Common myeloid progenitor, CD34-positive (primary cell): ENCODE measurements at regions of chr4 and their contacts with region 1.

Region 1: GRCh38 chr4:73864365-73864764 is 4.8 kb upstream of the CXCL1 start:
- DNase-seq: peak in 2 of 3 donors; percentile 57 to 60
- H3K4me3 ChIP-seq: no peak overlapping the region
- H3K27ac ChIP-seq: no peak overlapping the region
- H3K4me1 ChIP-seq: peaks cover 0 to 12% (median 7%) of the 10 kb centered on the region in 4 experiments
- H3K27me3 ChIP-seq: peaks cover 0 to under 1% (median 0%) of the 10 kb centered on the region in 5 experiments

Region 2: DNA sequence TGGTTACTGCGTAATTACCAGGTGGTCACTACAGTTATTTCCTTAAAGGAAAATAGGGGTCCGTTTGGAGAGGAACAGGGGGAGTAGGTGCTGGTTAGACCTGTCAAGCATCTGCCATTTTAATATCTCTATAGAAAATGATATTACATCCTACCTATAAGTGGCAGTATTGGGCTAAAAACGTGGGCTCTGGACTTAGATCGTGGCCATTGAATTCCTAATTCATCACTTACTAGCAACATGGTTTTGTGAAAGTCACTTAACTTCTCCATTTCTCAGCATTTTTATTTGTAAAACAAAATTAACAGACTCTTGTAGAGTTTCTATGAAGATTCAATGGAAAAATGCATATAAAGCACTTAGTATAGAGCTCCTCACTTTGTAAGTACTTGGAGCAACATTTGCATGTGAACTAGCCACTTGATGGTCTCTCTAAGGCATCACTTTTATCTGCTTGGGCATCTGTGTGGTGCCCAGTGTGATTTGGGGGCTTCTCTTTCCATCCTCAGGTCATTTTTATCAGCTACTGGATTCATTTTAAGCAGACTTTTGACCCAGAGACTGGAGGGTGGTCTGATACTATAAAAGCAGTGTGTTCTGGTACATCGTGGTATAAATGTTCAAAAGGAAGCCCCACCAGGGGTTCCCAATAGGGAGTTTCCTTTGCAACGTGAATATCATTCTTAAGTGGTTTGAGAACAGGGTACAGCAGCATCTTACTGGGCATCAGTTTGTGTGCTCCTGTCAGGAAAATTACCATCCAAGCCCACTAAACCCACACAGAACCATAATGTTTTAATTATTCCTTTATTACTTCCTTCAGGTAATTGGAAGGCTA is 201.4 kb before region 1 on chr4:
- CTCF ChIA-PET with region 1: interaction called, 38 read pairs
- POLR2A ChIA-PET with region 1: interaction called, 4 read pairs
- DNase-seq: peak; percentile 61 to 81 (median 81)
- H3K4me3 ChIP-seq: no peak overlapping the region
- H3K27ac ChIP-seq: no peak overlapping the region
- H3K4me1 ChIP-seq: peaks cover 5 to 25% (median 12%) of the 10 kb centered on the region in 4 experiments
- H3K27me3 ChIP-seq: no peaks in the 10 kb centered on the region

Region 3: GRCh38 chr4:73683033-73683432 is 181.3 kb before region 1 on chr4:
- CTCF ChIA-PET with region 1: no interaction called
- POLR2A ChIA-PET with region 1: no interaction called
- DNase-seq: no peak
- H3K4me3 ChIP-seq: no peak overlapping the region
- H3K27ac ChIP-seq: no peak overlapping the region
- H3K4me1 ChIP-seq: peaks cover 0 to 4% (median 1%) of the 10 kb centered on the region in 4 experiments
- H3K27me3 ChIP-seq: no peaks in the 10 kb centered on the region

Region 4: DNA sequence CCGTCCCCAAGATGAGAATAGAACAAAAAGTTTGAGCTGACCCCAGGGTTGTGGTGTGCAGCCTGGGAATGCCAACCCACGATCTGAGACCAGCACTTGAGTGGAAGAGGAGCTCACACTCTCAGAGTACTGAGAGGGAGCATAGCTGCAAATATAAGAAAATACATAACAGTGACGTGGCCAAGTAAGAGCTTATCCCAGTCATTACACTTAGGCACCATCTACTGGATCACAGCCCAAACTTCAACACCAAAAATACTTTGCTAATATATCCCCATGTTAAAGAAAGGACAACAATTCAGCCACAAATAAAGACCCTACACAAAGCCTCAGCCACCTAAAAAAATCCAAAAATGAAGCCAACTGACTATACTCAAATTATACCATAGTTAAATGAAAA is 61.2 kb before region 1 on chr4:
- CTCF ChIA-PET with region 1: no interaction called
- POLR2A ChIA-PET with region 1: no interaction called
- DNase-seq: no peak
- H3K4me3 ChIP-seq: no peak overlapping the region
- H3K27ac ChIP-seq: no peak overlapping the region
- H3K4me1 ChIP-seq: no peaks in the 10 kb centered on the region
- H3K27me3 ChIP-seq: no peaks in the 10 kb centered on the region

Region 5: DNA sequence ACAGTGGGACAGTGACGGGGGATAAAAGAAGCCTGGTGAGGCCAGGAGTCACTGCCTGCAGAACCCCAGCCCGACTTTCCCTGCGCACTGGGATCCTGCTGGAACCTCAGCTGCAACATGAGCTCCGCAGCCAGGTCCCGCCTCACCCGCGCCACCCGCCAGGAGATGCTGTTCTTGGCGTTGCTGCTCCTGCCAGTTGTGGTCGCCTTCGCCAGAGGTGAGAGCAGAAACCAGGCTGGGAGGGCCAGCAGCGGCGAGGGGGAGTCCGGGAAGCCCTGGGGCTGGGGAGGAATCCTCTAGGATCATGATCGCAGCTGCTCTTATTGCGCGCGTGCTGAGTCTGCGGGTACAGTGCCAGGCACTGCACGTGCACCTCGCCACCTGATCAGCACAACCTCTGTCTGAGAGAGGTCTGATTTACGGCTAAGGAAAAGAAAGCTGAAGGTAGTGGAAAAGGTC is 11.1 kb before region 1 on chr4 and contains the start of gene PF4V1:
- CTCF ChIA-PET with region 1: interaction called, 10 read pairs
- POLR2A ChIA-PET with region 1: no interaction called
- DNase-seq: peak in 2 of 3 donors; percentile 20 to 52
- H3K4me3 ChIP-seq: peak within 1 kb of the TSS in 4 of 7 experiments; percentile 24 to 60 (median 48)
- H3K27ac ChIP-seq: no peak within 1 kb of the TSS
- H3K4me1 ChIP-seq: peaks cover 0 to 9% (median 3%) of the 10 kb centered on the region in 4 experiments
- H3K27me3 ChIP-seq: peaks cover 0 to 9% (median 7%) of the 10 kb centered on the region in 5 experiments